Activated CD4-positive, alpha-beta T cell treated with anti-CD3 and anti-CD28 coated beads for 36 hours (primary cell): ENCODE measurements at regions of chr5 and their contacts with region 1.

Region 1: GRCh38 chr5:181114844-181115778 is 15.9 kb downstream of the OR2V1 start:
- DNase-seq: no peak
- ATAC-seq: no peak
- H3K4me3 Mint-ChIP-seq: no peak overlapping the region
- H3K27ac Mint-ChIP-seq: no peak overlapping the region
- H3K4me1 Mint-ChIP-seq: peaks cover 5% of the 10 kb centered on the region
- H3K27me3 Mint-ChIP-seq: peaks cover 67% of the 10 kb centered on the region

Region 2: GRCh38 chr5:181059297-181060230 is 55.5 kb before region 1 on chr5:
- CTCF ChIA-PET with region 1: no interaction called
- POLR2A ChIA-PET with region 1: no interaction called
- intact Hi-C with region 1: loop called in 1 of 2 experiments (anchors 5 kb)
- DNase-seq: peak; percentile 31
- ATAC-seq: no peak
- H3K4me3 Mint-ChIP-seq: no peak overlapping the region
- H3K27ac Mint-ChIP-seq: no peak overlapping the region
- H3K4me1 Mint-ChIP-seq: no peaks in the 10 kb centered on the region
- H3K27me3 Mint-ChIP-seq: peaks cover 71% of the 10 kb centered on the region